ENCODE measurements at regions of chr3 and their contacts with region 1.

Region 1: GRCh38 chr3:78988324-78988723 is 779.5 kb downstream of the ROBO1 start:
- DNase-seq: no peak
- H3K4me3 ChIP-seq: no peak overlapping the region
- H3K27ac ChIP-seq: no peak overlapping the region
- H3K4me1 ChIP-seq: peaks cover 0 to 5% (median 0%) of the 10 kb centered on the region in 4 experiments; a peak in 2 of 7 replicates
- H3K27me3 ChIP-seq: no peaks in the 10 kb centered on the region
- CTCF ChIP-seq: peak in 1 of 3 experiments; percentile 21; a peak in 2 of 4 replicates
- EP300 ChIP-seq: no peak
- POLR2A ChIP-seq: no peak
- RAD21 ChIP-seq: peak; percentile 43 to 51

Region 2: GRCh38 chr3:78791753-78792152 is 196.6 kb before region 1 on chr3:
- CTCF ChIA-PET with region 1: no interaction called
- POLR2A ChIA-PET with region 1: no interaction called
- DNase-seq: no peak
- H3K4me3 ChIP-seq: no peak overlapping the region
- H3K27ac ChIP-seq: no peak overlapping the region
- H3K4me1 ChIP-seq: peaks cover 0 to 2% (median 0%) of the 10 kb centered on the region in 4 experiments; a peak in 1 of 7 replicates
- H3K27me3 ChIP-seq: no peaks in the 10 kb centered on the region
- CTCF ChIP-seq: no peak
- EP300 ChIP-seq: no peak
- POLR2A ChIP-seq: no peak
- RAD21 ChIP-seq: no peak

Region 3: DNA sequence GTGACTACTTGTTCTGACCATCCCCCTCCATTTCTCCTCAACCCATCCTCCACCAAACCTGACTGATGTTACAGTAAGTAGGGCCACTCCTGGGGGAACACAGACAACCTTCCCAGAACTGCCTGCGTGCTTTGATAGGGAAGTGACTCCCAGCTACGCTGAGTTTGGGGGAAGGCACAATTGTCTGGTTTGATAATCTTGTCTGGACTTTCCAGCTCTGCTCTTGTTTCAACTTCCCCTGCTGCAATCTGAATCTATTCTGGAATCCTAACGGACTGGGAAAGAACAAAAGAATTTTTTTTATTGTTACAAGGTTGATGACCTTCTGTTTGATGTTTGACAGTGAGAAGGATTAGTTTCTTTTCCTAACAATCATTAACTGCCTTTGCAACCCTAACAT is 116.1 kb before region 1 on chr3:
- CTCF ChIA-PET with region 1: no interaction called
- POLR2A ChIA-PET with region 1: no interaction called
- DNase-seq: no peak
- H3K4me3 ChIP-seq: peak overlapping the region in 1 of 4 experiments; percentile 3; a peak in 1 of 8 replicates
- H3K27ac ChIP-seq: no peak overlapping the region
- H3K4me1 ChIP-seq: peaks cover 0 to 15% (median 6%) of the 10 kb centered on the region in 4 experiments; a peak in 6 of 7 replicates
- H3K27me3 ChIP-seq: peaks cover 0 to 1% (median 0%) of the 10 kb centered on the region in 4 experiments; a peak in 1 of 7 replicates
- CTCF ChIP-seq: no peak
- EP300 ChIP-seq: no peak
- POLR2A ChIP-seq: no peak
- RAD21 ChIP-seq: no peak

Region 4: DNA sequence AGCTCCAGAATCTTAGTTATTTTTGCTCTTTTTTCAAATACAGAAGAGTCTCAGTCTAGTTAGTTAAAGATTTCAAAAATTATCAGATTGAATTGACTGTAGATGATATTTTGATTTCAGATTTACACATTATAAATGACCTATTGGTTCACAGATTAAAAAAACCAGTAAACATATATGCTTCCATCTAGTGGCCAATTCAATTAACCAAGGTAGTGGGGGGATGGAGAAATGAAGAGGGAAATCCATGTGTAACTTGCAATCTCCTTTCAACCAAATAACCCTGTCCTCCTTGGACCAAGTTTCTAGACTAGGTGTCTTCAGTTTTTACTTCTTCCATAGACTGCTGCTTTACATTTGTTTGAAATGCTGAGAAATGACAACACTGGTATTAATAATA is 10.3 kb before region 1 on chr3:
- CTCF ChIA-PET with region 1: interaction called, 15 read pairs
- POLR2A ChIA-PET with region 1: interaction called, 3 read pairs
- DNase-seq: no peak
- H3K4me3 ChIP-seq: no peak overlapping the region
- H3K27ac ChIP-seq: no peak overlapping the region
- H3K4me1 ChIP-seq: peaks cover 3 to 25% (median 10%) of the 10 kb centered on the region in 4 experiments; a peak in 5 of 7 replicates
- H3K27me3 ChIP-seq: no peaks in the 10 kb centered on the region
- CTCF ChIP-seq: peak in 1 of 3 experiments; percentile 35; a peak in 1 of 4 replicates
- EP300 ChIP-seq: no peak
- POLR2A ChIP-seq: no peak
- RAD21 ChIP-seq: peak; percentile 24 to 41

Region 5: GRCh38 chr3:79011821-79012529 is 23.7 kb after region 1 on chr3:
- CTCF ChIA-PET with region 1: interaction called, 14 read pairs
- POLR2A ChIA-PET with region 1: interaction called, 3 read pairs
- DNase-seq: no peak
- H3K4me3 ChIP-seq: no peak overlapping the region; a peak in 1 of 8 replicates
- H3K27ac ChIP-seq: no peak overlapping the region
- H3K4me1 ChIP-seq: peaks cover 0 to 14% (median 10%) of the 10 kb centered on the region in 4 experiments; a peak in 5 of 7 replicates
- H3K27me3 ChIP-seq: no peaks in the 10 kb centered on the region
- CTCF ChIP-seq: no peak
- EP300 ChIP-seq: no peak
- POLR2A ChIP-seq: no peak
- RAD21 ChIP-seq: no peak

Region 6: DNA sequence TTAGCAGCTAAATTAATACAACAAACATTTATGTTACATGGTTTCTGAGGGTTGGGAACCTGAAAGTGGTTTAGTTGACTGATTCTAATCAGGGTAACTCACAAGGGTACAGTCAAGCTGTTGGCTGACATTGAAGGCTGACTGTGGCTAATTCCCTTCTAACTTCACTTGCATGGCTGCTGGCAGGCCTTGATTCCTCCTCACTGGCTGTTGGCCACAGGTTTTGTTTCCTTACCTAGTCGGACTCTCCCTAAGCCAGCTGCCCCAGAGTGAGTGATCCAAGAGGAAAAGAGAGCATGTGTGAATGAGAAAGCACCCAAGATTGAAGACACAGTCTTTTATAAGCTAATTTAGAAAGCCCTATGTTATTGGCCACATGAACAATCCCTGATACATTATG is 79.4 kb after region 1 on chr3:
- CTCF ChIA-PET with region 1: no interaction called
- POLR2A ChIA-PET with region 1: no interaction called
- DNase-seq: no peak
- H3K4me3 ChIP-seq: no peak overlapping the region
- H3K27ac ChIP-seq: no peak overlapping the region
- H3K4me1 ChIP-seq: peaks cover 0 to 10% (median 5%) of the 10 kb centered on the region in 4 experiments; a peak in 5 of 7 replicates
- H3K27me3 ChIP-seq: no peaks in the 10 kb centered on the region
- CTCF ChIP-seq: no peak
- EP300 ChIP-seq: no peak
- POLR2A ChIP-seq: no peak
- RAD21 ChIP-seq: no peak

Region 7: GRCh38 chr3:79247725-79248043 is 259.4 kb after region 1 on chr3:
- CTCF ChIA-PET with region 1: no interaction called
- POLR2A ChIA-PET with region 1: no interaction called
- DNase-seq: no peak
- H3K4me3 ChIP-seq: no peak overlapping the region
- H3K27ac ChIP-seq: no peak overlapping the region
- H3K4me1 ChIP-seq: peaks cover 0 to 8% (median 1%) of the 10 kb centered on the region in 4 experiments; a peak in 4 of 7 replicates
- H3K27me3 ChIP-seq: no peaks in the 10 kb centered on the region
- CTCF ChIP-seq: no peak
- EP300 ChIP-seq: no peak
- POLR2A ChIP-seq: no peak
- RAD21 ChIP-seq: no peak

Measured in H1 (cell line).